Head of caudate nucleus (tissue), 42 donors: ENCODE measurements at regions of chr1 and their contacts with region 1.

Region 1: GRCh38 chr1:155859234-155859829 is at the start of gene SYT11:
- DNase-seq: peak; percentile 92 to 98 (median 96)

Region 2: GRCh38 chr1:155455588-155456195 is 403.6 kb before region 1 on chr1:
- intact Hi-C with region 1: no loop called
- DNase-seq: peak in 2 of 42 donors; percentile 23 to 28

Region 3: DNA sequence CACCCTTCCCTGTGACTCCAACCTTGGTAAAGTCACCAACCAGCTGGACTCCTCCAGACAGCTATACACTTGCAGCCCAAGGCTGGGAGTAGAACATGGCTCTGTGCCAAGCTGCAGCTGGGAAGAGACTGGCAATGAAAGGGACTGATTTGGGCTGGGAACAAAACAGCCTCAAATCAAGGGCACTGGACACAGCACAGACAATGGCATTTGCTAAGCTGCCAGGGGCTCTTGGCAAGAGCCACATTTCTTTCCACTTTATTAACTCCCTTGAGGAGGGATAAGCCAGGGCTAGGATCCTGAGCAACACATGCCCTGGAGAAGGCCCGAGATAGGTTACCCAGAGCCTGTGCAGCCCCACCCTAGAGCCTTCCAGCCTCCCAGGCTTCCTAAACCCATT is 12.1 kb after region 1 on chr1:
- intact Hi-C with region 1: loop called (anchors 1 kb)
- DNase-seq: peak; percentile 79 to 98 (median 93)

Region 4: GRCh38 chr1:155934097-155934935 is 75.0 kb after region 1 on chr1 and contains the start of gene KHDC4:
- intact Hi-C with region 1: loop called (anchors 5 kb)
- DNase-seq: peak; percentile 92 to 99 (median 97)

Region 5: DNA sequence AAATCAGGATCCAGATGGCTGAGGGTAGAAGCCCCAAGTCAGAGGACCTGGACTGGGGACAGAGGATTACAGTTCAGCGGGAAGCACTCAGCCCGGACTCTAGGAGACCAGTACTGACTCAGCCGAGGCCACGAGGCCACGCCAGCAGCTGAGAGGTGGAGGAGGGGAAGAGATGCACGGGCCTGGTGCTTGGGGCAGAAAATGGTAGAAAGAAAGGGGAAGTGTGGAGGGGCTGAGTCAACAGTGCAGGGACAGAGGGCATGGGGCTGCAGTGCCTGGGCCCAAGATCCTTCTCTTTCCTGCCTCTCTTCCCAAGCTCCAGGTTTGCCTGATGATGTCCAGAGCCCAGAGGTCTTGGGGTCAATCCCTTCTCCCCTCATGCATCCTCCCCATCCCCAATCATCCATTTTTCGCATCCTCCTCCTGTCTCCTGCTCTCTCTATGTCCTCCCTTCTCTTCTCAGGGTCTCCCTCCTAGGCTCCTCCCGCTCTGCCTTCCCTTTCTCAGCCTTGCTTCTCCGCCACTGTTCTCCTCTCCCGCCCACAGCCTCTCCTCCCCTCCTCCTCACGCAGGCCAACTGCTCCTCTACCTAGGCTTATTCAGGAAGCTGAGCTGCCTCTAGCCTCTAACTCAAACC is 111.3 kb after region 1 on chr1:
- intact Hi-C with region 1: loop called (anchors 5 kb)
- DNase-seq: peak; percentile 67 to 93 (median 82)